Activated CD8-positive, alpha-beta T cell treated with anti-CD3 and anti-CD28 coated beads, Interleukin-2, amount 10 ng/mL, durations not matched to agents 7 days and 5 days (primary cell): ENCODE measurements at regions of chr7 and their contacts with region 1.

Region 1: DNA sequence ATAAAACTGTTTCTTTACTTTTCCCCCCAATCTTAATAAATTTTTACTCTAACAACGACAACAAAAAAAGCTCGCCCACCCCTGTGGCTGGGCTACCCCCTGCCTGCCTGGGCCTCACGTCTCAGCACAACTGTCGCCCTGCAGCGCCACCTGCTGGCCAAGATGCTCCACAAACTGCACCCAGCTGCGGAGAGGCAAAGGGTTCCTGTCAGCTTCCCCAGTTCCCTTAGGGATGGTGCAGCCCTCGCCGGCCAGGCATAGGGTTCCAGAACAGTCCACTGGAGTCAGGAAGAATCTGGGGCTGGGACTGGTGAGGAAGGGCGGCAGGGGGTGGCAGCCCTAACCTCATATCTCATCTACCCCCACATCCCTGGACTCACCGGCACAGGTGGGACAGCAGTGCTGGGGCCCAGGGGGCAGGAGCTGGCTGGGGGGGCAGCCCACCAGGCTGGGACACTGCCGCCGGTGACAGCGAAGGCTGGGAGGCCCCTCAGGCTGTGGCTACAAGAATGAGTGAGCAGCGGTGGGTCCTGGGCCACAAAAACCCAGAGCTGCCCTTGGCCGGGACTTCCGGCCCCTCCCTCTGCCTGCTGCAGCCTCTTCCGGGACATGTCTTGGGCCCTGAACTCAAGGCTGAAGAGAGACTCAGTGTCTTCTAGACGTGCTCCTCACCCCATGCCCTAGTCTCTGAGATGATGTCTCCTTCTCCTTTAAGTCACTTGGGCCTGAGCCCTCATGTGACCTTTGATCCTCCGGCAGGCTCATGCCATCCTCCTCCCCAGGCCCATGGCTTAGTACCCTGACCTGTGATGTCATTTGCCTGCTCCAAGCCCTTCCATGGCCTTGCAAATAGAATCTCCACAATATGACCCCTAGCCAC is 21.2 kb downstream of the ATP6V1F start:
- DNase-seq: peak; percentile 87
- ATAC-seq: peak; percentile 76
- H3K4me3 Mint-ChIP-seq: no peak overlapping the region
- H3K27ac Mint-ChIP-seq: peak overlapping the region; percentile 26
- H3K4me1 Mint-ChIP-seq: peaks cover 7% of the 10 kb centered on the region
- H3K27me3 Mint-ChIP-seq: no peaks in the 10 kb centered on the region

Region 2: DNA sequence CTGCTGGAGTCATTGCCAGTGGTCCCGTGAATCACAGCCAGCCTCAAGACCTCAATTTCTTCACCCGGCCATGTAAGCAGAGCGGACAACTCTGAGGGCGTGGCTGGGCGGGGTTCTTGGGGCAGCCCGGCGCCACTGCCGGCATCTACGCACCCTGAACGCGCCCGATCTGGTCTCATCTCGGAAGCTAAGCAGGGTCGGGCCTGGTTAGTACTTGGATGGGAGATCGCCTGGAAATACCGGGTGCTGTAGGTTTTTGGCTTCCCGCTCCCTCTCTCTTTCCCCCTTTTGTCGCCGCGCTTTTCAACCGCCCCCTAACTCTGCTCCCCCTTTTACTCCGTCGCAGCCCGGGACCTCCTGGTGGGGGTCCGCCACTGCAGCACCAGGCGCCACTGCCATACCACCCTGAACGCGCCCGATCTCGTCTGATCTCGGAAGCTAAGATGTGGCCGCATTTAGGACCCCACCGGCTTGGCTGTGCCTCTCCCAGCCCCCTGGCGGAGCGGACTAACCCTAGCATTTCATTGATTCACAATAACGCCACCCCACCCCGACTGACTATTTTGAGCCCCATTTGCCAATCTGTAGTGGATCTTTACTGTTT is 186.5 kb before region 1 on chr7:
- CTCF ChIA-PET with region 1: no interaction called
- POLR2A ChIA-PET with region 1: no interaction called
- DNase-seq: peak; percentile 74
- ATAC-seq: peak; percentile 90
- H3K4me3 Mint-ChIP-seq: peak overlapping the region; percentile 80
- H3K27ac Mint-ChIP-seq: peak overlapping the region; percentile 71
- H3K4me1 Mint-ChIP-seq: peaks cover 12% of the 10 kb centered on the region
- H3K27me3 Mint-ChIP-seq: peaks cover 57% of the 10 kb centered on the region

Region 3: GRCh38 chr7:128814499-128814898 is 69.4 kb before region 1 on chr7:
- CTCF ChIA-PET with region 1: interaction called, 12 read pairs
- POLR2A ChIA-PET with region 1: no interaction called
- DNase-seq: no peak
- ATAC-seq: no peak
- H3K4me3 Mint-ChIP-seq: no peak overlapping the region
- H3K27ac Mint-ChIP-seq: no peak overlapping the region
- H3K4me1 Mint-ChIP-seq: no peaks in the 10 kb centered on the region
- H3K27me3 Mint-ChIP-seq: peaks cover 3% of the 10 kb centered on the region

Region 4: DNA sequence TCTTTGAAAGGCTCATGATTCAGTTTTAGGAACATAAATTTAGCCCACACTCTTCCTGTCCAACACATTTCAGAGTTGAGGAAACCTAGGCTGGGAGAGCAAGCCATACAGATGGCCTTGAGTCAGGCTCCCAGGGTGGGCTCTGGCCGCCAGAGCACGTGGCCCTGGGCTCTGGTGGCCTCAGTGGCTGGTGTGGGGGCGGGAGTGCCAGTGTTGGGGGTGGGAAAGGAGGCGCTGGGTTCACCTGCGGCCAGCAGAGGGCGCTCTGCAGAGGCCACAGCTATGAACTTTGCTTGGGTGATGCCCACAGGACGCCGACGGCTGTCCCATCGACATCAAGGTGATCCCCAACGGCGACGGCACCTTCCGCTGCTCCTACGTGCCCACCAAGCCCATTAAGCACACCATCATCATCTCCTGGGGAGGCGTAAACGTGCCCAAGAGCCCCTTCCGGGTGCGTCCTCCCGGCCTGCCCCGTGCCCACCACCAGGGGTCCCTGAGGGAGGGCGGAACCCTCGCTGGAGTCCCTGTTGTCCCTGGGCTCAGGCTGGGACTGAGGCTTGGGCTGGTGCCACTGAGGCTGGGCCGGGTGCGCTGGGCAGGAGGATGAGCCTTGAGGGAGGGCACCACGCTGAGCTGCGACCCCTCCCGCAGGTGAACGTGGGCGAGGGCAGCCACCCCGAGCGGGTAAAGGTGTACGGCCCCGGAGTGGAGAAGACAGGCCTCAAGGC is 41.8 kb before region 1 on chr7:
- CTCF ChIA-PET with region 1: interaction called, 22 read pairs
- POLR2A ChIA-PET with region 1: no interaction called
- DNase-seq: peak; percentile 69
- ATAC-seq: peak; percentile 64
- H3K4me3 Mint-ChIP-seq: no peak overlapping the region
- H3K27ac Mint-ChIP-seq: peak overlapping the region; percentile 34
- H3K4me1 Mint-ChIP-seq: peaks cover 1% of the 10 kb centered on the region
- H3K27me3 Mint-ChIP-seq: no peaks in the 10 kb centered on the region

Region 5: GRCh38 chr7:128862571-128863432 is 21.1 kb before region 1 on chr7 and contains the start of gene ATP6V1F:
- CTCF ChIA-PET with region 1: interaction called, 118 read pairs
- POLR2A ChIA-PET with region 1: no interaction called
- DNase-seq: peak; percentile 99
- ATAC-seq: peak; percentile 94
- H3K4me3 Mint-ChIP-seq: peak within 1 kb of the TSS; percentile 90
- H3K27ac Mint-ChIP-seq: peak within 1 kb of the TSS; percentile 92
- H3K4me1 Mint-ChIP-seq: peaks cover 19% of the 10 kb centered on the region
- H3K27me3 Mint-ChIP-seq: peaks cover 1% of the 10 kb centered on the region
- total RNA-seq, gene ATP6V1F: 130 to 138 TPM

Region 6: DNA sequence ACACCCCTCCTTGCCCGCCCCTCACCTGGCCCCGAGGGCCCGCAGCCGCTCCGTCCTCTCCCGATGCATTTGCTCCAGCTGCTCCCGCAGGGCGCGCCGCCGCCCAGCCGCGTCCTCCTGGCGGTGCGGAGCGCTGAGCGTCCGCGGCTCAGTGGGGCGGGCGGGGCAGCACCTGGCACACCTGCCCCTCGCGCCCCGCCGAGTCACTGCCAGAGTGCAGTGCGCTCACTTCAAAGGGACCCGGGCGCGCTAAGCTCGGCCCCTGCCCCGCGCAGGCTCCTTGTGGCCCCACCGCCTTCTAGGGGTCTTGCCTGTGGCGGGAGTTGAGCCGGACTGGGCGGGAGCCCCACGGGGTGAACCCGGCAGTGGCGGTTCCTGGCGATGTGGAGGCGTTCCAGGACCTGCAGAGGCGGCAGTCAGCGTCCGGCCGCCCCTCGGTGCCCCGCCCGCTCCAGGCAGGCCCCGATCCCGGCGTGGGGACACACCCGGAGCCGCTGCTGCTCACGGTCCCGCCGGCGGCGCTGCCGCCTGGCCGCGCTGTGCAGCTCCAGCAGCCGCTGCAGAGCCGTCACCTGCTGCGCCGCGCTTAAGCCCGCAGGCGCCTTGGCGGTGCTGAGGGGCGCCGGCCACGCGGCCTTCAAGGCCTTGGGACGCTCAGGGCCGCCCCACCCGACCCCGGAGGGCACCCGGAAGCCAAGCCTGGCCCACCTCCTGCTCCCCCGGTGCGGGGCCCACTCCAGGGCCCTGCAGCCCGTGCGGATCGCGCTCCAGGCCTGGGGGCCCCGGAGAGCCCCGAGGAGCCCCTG is 14.5 kb before region 1 on chr7:
- CTCF ChIA-PET with region 1: interaction called, 118 read pairs
- POLR2A ChIA-PET with region 1: interaction called, 3 read pairs
- DNase-seq: peak; percentile 58
- ATAC-seq: peak; percentile 89
- H3K4me3 Mint-ChIP-seq: peak overlapping the region; percentile 56
- H3K27ac Mint-ChIP-seq: no peak overlapping the region
- H3K4me1 Mint-ChIP-seq: peaks cover 14% of the 10 kb centered on the region
- H3K27me3 Mint-ChIP-seq: peaks cover 20% of the 10 kb centered on the region

Region 7: DNA sequence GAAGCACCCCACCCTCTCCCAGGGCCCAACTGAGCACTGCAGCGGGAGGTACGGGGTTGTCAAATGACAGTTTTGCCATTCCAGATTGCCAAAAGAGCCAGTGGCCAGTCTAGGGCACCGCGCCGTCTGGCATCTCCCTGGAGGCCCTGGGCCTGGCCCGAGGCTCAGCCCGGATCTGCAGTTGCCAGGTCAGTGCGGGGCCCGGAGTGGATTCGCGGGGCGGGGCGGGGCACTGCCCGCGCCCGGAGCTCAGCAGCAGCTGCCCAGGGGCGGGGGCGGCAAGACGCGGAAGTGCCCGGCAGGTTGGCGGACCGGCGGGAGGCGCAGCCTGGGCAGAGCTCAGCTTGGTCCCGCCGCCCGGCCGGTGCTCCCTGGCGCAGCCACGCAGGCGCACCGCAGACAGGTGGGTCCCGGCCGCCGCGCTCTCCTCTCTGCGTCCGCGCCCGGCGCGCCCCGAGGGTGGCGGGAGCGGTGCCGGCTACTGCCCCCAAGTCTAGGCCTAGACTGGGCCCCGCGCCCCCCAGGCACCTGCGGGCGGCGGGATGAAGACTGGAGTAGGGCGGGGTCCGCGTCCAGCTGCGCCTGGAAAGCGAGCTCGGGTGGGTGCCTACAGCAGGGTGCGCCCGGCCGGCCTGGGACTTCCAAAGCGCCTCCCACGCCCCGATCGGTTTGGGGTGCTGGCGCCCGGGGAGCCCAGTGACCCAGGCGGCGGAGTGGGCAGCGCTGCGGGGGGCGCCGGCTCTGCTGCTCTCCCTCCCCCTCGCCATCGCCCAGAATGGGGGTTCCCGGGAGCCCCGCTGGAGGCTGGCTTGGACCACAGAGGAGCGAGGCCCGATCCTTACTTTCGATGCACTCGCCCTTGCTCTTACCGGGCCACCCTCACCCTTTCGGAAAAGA is 54.0 kb after region 1 on chr7 and contains the start of gene IRF5:
- CTCF ChIA-PET with region 1: no interaction called
- POLR2A ChIA-PET with region 1: no interaction called
- DNase-seq: peak; percentile 35
- ATAC-seq: peak; percentile 50
- H3K4me3 Mint-ChIP-seq: peak within 1 kb of the TSS; percentile 80
- H3K27ac Mint-ChIP-seq: peak within 1 kb of the TSS; percentile 72
- H3K4me1 Mint-ChIP-seq: peaks cover 50% of the 10 kb centered on the region
- H3K27me3 Mint-ChIP-seq: peaks cover 16% of the 10 kb centered on the region
- total RNA-seq, gene IRF5: 7.4 to 8.0 TPM